ENCODE measurements at regions of chr4 and their contacts with region 1.

Region 1: GRCh38 chr4:108570993-108571569 is 49.3 kb upstream of the RPL34 start:
- DNase-seq: no peak
- H3K4me3 Mint-ChIP-seq: no peak overlapping the region
- H3K27ac Mint-ChIP-seq: no peak overlapping the region
- H3K4me1 Mint-ChIP-seq: peaks cover 24% of the 10 kb centered on the region
- H3K27me3 Mint-ChIP-seq: no peaks in the 10 kb centered on the region

Region 2: GRCh38 chr4:108018040-108018883 is 552.8 kb before region 1 on chr4:
- CTCF ChIA-PET with region 1: interaction called, 90 read pairs
- intact Hi-C with region 1: loop called (anchors 1 kb)
- DNase-seq: peak; percentile 95
- H3K4me3 Mint-ChIP-seq: no peak overlapping the region
- H3K27ac Mint-ChIP-seq: no peak overlapping the region
- H3K4me1 Mint-ChIP-seq: peaks cover 13% of the 10 kb centered on the region
- H3K27me3 Mint-ChIP-seq: no peaks in the 10 kb centered on the region

Region 3: DNA sequence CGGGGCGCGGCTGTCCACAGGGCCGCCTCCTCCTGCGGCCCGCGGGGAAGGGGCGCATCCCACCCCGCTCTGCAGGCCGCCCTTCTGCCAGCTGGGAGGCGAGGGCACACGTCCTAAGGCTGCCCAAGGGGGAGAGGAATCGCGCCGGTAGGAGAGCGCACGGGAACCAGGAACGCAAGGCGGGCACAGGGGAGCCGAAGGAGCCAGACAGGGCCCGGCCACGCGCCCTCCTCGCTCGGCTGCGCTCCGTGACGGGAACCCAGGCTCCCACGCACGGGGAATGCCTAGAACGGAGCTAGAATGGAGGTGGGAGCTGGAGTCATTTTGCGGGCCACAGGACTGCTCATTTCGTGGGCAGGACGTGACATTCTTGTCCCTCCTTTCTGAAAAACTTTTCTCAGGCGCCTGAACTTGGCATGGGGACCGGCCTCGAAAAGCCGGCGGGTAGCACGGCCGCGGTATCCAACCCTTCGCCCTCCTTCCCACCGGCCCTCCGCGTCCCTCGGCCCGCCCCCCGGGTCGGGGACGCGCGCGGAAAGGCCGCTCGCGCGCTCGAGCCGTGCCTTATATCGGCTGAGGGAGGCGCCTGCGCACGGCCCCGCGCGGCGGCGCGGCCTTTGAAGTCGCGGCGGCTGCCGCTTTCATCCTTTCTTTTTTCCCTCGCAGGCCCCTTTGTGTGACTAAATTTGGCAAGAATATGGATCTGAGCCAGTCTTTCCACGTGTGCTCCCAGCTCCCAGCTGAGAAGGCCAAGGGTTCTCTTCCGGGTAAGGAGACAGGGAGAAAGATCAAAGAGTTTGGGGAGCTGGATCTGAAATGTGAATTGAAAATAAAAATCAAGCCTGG is 398.1 kb before region 1 on chr4:
- CTCF ChIA-PET with region 1: interaction called, 6 read pairs
- intact Hi-C with region 1: loop called (anchors 2 kb)
- DNase-seq: peak; percentile 79
- H3K4me3 Mint-ChIP-seq: peak overlapping the region; percentile 91
- H3K27ac Mint-ChIP-seq: peak overlapping the region; percentile 92
- H3K4me1 Mint-ChIP-seq: peaks cover 50% of the 10 kb centered on the region
- H3K27me3 Mint-ChIP-seq: no peaks in the 10 kb centered on the region

Region 4: GRCh38 chr4:108204518-108204917 is 366.6 kb before region 1 on chr4:
- CTCF ChIA-PET with region 1: no interaction called
- intact Hi-C with region 1: no loop called
- DNase-seq: no peak
- H3K4me3 Mint-ChIP-seq: no peak overlapping the region
- H3K27ac Mint-ChIP-seq: no peak overlapping the region
- H3K4me1 Mint-ChIP-seq: peaks cover 31% of the 10 kb centered on the region
- H3K27me3 Mint-ChIP-seq: no peaks in the 10 kb centered on the region

Region 5: GRCh38 chr4:108483079-108483478 is 88.0 kb before region 1 on chr4:
- CTCF ChIA-PET with region 1: no interaction called
- intact Hi-C with region 1: loop called (anchors 5 kb)
- DNase-seq: peak; percentile 60
- H3K4me3 Mint-ChIP-seq: peak overlapping the region; percentile 33
- H3K27ac Mint-ChIP-seq: peak overlapping the region; percentile 16
- H3K4me1 Mint-ChIP-seq: peaks cover 33% of the 10 kb centered on the region
- H3K27me3 Mint-ChIP-seq: no peaks in the 10 kb centered on the region

Region 6: GRCh38 chr4:108533245-108533844 is 37.7 kb before region 1 on chr4:
- CTCF ChIA-PET with region 1: interaction called, 12 read pairs
- intact Hi-C with region 1: no loop called
- DNase-seq: no peak
- H3K4me3 Mint-ChIP-seq: peak overlapping the region; percentile 19
- H3K27ac Mint-ChIP-seq: no peak overlapping the region
- H3K4me1 Mint-ChIP-seq: peaks cover 72% of the 10 kb centered on the region
- H3K27me3 Mint-ChIP-seq: no peaks in the 10 kb centered on the region

Region 7: GRCh38 chr4:108581083-108581482 is 10.0 kb after region 1 on chr4:
- CTCF ChIA-PET with region 1: interaction called, 15 read pairs
- intact Hi-C with region 1: no loop called
- DNase-seq: no peak
- H3K4me3 Mint-ChIP-seq: no peak overlapping the region
- H3K27ac Mint-ChIP-seq: no peak overlapping the region
- H3K4me1 Mint-ChIP-seq: peaks cover 9% of the 10 kb centered on the region
- H3K27me3 Mint-ChIP-seq: no peaks in the 10 kb centered on the region

Measured in activated naive CD4-positive, alpha-beta T cell treated with anti-CD3 and anti-CD28 coated beads for 36 hours (primary cell).